ENCODE measurements at regions of chr14 and their contacts with region 1.

Region 1: DNA sequence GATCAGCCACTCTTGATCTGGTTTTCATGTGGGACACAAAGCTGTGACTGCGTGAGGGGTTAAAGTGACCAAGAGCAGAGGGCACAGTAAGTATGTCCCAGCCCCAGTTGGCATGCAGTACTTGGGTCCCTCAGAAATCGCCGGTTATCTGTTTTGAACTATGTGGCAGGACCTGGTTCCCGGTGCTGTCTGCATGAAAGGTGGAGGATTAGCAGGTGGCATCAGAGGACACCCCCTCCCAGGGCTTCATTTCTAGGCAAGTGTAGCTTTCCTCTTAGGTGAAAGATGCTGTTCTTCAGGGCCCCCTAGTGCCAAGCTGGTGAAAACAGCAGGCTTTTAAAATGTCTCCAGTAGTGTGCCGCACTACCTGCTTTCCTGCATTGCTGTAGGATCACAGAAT is 57.1 kb downstream of the ATG14 start:
- DNase-seq: peak; percentile 59 to 77 (median 77)
- H3K4me3 ChIP-seq: no peak overlapping the region
- H3K27ac ChIP-seq: no peak overlapping the region
- H3K4me1 ChIP-seq: no peaks in the 10 kb centered on the region
- H3K27me3 ChIP-seq: no peaks in the 10 kb centered on the region

Region 2: DNA sequence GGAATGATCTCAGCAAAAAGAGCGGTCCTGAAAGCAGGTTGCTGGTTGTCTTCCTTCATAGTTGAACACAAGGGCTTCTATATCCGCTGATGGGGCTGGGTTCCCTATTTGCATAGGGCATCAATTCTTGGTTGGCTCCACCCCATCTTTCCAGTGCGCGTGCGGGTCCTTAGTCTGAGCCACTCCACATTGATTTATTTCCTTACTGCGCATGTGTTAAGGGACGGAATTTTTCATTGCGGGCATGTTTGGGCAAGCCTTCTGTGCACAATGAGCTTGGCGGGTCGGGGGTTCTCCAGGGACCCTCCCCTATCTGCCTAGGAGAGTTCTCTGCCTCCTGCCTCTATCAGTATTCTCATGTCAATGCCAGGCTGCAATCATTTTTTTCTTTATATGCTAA is 141.9 kb before region 1 on chr14:
- CTCF ChIA-PET with region 1: interaction called, 49 read pairs
- POLR2A ChIA-PET with region 1: no interaction called
- DNase-seq: peak in 2 of 3 donors; percentile 13 to 17
- H3K4me3 ChIP-seq: no peak overlapping the region
- H3K27ac ChIP-seq: no peak overlapping the region
- H3K4me1 ChIP-seq: peaks cover 0 to 1% (median 0%) of the 10 kb centered on the region in 4 experiments
- H3K27me3 ChIP-seq: no peaks in the 10 kb centered on the region

Region 3: GRCh38 chr14:55245657-55246268 is 108.7 kb before region 1 on chr14:
- CTCF ChIA-PET with region 1: interaction called, 42 read pairs
- POLR2A ChIA-PET with region 1: no interaction called
- DNase-seq: peak; percentile 43 to 64 (median 56)
- H3K4me3 ChIP-seq: no peak overlapping the region
- H3K27ac ChIP-seq: no peak overlapping the region
- H3K4me1 ChIP-seq: no peaks in the 10 kb centered on the region
- H3K27me3 ChIP-seq: peaks cover 0 to 7% (median 0%) of the 10 kb centered on the region in 5 experiments

Region 4: DNA sequence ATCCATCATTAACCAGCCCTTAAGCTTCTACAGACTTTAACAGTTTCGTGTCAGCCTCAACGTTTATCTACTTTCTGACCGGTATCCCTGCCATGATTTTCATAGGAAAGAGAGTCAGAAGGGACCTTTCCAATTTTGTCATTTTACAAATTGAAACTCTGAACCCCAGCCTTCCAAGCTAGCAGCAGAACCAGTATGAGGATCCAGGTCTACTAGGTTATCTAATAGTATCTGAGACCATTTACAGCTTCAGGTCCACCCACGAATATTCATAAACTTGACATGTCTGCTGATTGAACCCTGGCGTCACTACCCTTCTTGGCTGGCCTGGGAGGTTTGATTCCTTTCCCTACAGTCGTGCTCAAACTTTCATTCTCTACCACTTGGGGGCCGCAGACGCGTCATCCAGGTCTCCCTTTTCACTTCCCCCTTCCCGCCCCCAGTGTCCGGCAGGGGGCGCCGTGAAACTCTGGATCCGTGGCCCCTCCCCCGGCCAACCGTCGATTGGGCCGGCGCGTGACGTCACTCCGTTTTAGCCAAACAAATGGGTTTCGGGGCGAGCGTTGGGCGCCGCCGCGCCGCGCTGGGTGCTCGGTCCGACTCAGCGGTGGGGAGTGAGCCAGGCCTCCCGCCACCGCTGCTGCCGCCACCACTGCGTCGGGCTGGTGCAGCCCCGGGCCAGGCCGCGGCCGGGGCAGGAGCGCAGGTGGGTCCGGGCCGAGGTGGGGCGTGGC is 83.5 kb before region 1 on chr14 and contains the start of gene FBXO34:
- CTCF ChIA-PET with region 1: interaction called, 89 read pairs
- POLR2A ChIA-PET with region 1: interaction called, 4 read pairs
- DNase-seq: peak; percentile 96 to 98 (median 97)
- H3K4me3 ChIP-seq: peak within 1 kb of the TSS; percentile 80 to 99 (median 95)
- H3K27ac ChIP-seq: peak within 1 kb of the TSS; percentile 89 to 96
- H3K4me1 ChIP-seq: peaks cover 5 to 27% (median 16%) of the 10 kb centered on the region in 4 experiments
- H3K27me3 ChIP-seq: no peaks in the 10 kb centered on the region

Region 5: GRCh38 chr14:55339770-55340169 is 14.7 kb before region 1 on chr14:
- CTCF ChIA-PET with region 1: interaction called, 13 read pairs
- POLR2A ChIA-PET with region 1: no interaction called
- DNase-seq: no peak
- H3K4me3 ChIP-seq: no peak overlapping the region
- H3K27ac ChIP-seq: no peak overlapping the region
- H3K4me1 ChIP-seq: peaks cover 0 to 14% (median 6%) of the 10 kb centered on the region in 4 experiments
- H3K27me3 ChIP-seq: no peaks in the 10 kb centered on the region

Region 6: DNA sequence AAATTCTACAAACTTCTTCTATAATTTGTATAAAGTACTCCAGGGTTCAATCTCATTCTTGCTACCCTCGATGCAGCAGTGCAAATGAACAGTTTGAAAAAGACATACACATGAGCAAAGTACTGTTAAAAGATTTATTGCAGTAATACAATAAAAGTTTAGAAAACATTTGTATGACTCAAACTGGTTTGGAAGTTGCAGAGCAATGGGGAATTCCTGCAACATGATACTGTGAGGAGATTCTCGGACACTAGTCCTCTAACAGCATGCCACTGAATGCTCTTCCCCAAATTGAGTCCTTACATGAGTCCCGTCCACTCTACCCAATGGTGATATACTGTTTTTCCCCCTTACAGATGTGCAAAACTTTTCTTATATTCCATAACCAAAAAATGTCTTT is 11.8 kb after region 1 on chr14:
- CTCF ChIA-PET with region 1: interaction called, 39 read pairs
- POLR2A ChIA-PET with region 1: no interaction called
- DNase-seq: no peak
- H3K4me3 ChIP-seq: no peak overlapping the region
- H3K27ac ChIP-seq: no peak overlapping the region
- H3K4me1 ChIP-seq: no peaks in the 10 kb centered on the region
- H3K27me3 ChIP-seq: no peaks in the 10 kb centered on the region

Region 7: DNA sequence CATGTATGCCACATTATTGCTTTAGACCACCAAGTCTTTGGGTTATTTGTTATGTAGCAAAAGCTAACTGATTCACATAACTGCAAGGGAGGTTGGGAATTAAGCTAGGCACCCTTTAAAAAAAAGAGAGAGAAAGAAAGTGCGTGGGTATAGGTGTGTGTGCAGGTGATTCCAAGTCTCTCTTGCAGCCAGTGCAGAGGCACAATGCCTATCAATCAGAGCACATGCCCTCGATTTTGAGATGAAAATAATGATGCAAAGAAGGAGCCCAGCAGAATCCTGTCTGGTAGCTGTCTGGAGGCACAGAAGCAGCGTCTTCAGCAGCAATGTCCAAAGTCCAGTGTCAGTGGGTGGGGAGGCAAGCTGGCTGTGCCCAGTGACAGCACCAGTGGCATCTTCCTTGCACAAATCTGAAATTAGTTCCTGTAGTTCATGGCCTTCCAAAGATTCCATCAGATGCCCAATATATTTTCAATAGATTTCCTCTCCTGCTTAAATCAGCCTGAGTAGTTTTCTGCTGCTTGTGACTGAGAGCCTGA is 148.3 kb after region 1 on chr14:
- CTCF ChIA-PET with region 1: no interaction called
- POLR2A ChIA-PET with region 1: no interaction called
- DNase-seq: no peak
- H3K4me3 ChIP-seq: no peak overlapping the region
- H3K27ac ChIP-seq: no peak overlapping the region
- H3K4me1 ChIP-seq: no peaks in the 10 kb centered on the region
- H3K27me3 ChIP-seq: no peaks in the 10 kb centered on the region

Measured in common myeloid progenitor, CD34-positive (primary cell).